AG04450 (cell line): ENCODE measurements at regions of chr10 and their contacts with region 1.

Region 1: DNA sequence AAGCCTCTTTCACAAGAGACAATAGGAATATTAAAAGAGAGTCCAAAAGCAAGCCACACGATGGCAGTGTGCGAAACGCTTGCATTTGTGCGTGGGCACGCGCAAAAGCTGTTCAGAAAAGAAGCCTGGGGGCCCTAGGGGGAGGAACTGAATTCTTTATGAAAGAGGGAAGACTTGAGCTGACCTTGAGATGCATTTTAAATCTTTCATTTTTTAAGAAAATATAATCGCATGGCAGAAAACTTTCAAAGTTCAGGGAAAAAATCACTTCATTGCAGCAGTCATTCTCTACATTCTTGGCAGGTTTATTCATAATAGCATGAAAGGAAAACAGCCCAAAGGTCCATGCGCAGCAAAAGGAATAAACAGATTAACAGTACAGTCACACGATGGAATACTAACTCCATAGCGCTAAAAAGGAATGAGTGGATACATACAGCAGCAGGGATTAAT is 206.5 kb upstream of the PRKCQ start:
- DNase-seq: peak; percentile 41
- H3K4me3 ChIP-seq: peak overlapping the region; percentile 14
- H3K27ac ChIP-seq: peak overlapping the region; percentile 49
- H3K27me3 ChIP-seq: no peaks in the 10 kb centered on the region
- CTCF ChIP-seq: peak; percentile 70

Region 2: DNA sequence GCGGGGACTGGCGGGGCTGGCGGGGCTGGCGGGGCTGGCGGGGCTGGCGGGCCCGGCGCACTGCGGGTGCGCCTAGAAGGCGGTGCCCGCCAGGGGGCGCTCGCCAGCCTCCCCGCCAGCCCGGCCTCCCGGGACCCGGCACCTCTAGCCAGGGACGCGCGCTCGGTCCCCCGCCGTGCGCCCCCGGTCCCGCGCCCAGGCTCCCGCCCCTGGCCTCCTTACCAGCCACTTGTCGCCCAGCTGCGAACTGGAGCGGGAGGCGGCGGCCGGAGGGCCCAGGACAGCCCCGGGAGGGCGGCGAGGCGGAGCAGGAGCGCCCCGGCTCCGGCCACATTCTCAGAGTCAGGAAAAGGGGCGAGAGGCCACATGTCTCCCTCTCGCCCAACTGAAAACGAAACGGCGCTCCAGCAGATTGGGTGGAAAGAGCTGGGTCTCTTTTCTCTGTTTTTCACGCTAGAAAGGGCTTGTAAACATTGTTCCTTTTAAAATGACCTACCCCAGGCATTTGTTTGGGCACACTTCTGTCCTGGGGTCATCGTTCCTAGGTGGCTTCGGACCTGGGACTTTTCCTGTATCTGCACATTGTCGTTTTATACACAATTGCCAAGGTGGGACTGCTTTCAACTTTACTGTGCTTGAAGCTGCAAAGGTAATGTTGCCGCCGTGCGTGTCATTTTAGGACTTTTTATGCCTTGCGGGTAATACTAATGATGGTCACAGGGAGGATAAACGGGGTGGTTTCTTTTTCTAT is 206.2 kb before region 1 on chr10:
- CTCF ChIA-PET with region 1: no interaction called
- POLR2A ChIA-PET with region 1: no interaction called
- DNase-seq: peak; percentile 10
- H3K4me3 ChIP-seq: peak overlapping the region; percentile 66
- H3K27ac ChIP-seq: no peak overlapping the region
- H3K27me3 ChIP-seq: peaks cover 24% of the 10 kb centered on the region
- CTCF ChIP-seq: peak; percentile 40

Region 3: GRCh38 chr10:6815346-6815745 is 28.7 kb after region 1 on chr10:
- CTCF ChIA-PET with region 1: interaction called, 10 read pairs
- POLR2A ChIA-PET with region 1: no interaction called
- DNase-seq: no peak
- H3K4me3 ChIP-seq: no peak overlapping the region
- H3K27ac ChIP-seq: no peak overlapping the region
- H3K27me3 ChIP-seq: no peaks in the 10 kb centered on the region
- CTCF ChIP-seq: no peak